ENCODE measurements at regions of chr7 and their contacts with region 1.

Region 1: DNA sequence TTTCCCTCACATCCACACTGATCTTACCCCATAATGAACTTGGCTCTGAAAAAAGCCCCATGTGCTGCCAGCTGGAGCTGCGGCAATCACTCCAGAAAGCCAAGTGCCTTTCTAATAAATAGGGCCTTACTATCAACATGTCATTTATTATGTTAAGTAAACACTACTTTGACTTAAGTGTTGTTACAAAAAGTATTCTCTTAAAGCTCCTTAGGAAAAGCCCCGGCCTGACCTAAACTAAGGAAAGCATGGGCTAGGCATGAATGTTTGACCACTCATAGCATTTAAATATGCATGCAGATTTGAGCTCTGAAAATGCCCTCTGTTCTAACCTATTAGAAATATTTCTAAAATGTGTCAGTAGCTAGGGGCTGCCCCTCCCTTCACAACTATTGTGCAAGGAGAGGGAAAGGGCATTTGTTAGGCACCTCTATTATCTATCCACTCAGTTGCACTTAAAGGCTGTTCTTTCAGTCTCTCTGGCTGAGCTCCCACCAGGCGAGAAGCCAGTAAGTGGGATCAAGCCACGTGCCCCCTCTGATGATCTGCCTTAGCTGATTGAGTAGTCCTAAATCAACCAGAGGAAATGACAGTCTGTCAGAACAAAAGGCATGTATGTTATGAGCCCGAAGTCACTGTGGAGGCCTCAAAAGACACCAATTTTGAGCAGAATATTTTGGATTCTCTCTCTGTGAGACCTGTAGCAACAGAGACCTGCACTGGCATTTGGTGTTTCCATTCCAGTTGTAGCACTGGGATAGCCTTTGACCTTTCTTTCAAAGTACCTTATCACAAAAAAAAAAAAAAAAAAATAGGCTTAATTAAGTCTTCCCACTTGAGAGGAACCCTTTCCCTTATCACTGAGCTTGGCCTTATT is 77.1 kb downstream of the ITGB8 start:
- DNase-seq: peak; percentile 78
- H3K4me3 ChIP-seq: no peak overlapping the region
- H3K27ac ChIP-seq: peak overlapping the region; percentile 28
- H3K4me1 ChIP-seq: peaks cover 17% of the 10 kb centered on the region
- H3K27me3 ChIP-seq: no peaks in the 10 kb centered on the region
- CTCF ChIP-seq: no peak

Region 2: DNA sequence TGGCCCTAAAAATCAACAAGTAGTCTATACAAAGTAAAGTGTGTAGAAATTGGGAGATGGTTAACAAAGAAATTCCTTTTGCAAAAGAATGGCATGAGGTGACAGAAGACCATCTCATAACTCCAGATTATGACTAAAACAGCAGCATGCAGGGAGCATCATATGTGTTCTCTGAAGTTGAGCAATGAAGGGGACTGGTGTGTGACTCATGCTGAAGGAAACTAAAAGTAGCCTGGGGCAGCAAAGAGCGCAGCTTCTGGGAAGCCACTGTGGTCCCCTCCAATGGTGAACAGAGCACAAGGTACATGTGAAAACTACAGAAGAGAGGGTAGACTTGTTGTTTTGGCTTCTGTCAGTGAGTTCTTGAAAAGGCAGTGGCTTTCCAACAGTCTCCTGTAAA is 324.0 kb before region 1 on chr7:
- CTCF ChIA-PET with region 1: no interaction called
- POLR2A ChIA-PET with region 1: no interaction called
- intact Hi-C with region 1: no loop called
- DNase-seq: no peak
- H3K4me3 ChIP-seq: no peak overlapping the region
- H3K27ac ChIP-seq: no peak overlapping the region
- H3K4me1 ChIP-seq: no peaks in the 10 kb centered on the region
- H3K27me3 ChIP-seq: no peaks in the 10 kb centered on the region
- CTCF ChIP-seq: no peak

Region 3: GRCh38 chr7:20114468-20114867 is 293.4 kb before region 1 on chr7:
- CTCF ChIA-PET with region 1: no interaction called
- POLR2A ChIA-PET with region 1: no interaction called
- intact Hi-C with region 1: no loop called
- DNase-seq: peak; percentile 46
- H3K4me3 ChIP-seq: no peak overlapping the region
- H3K27ac ChIP-seq: no peak overlapping the region
- H3K4me1 ChIP-seq: no peaks in the 10 kb centered on the region
- H3K27me3 ChIP-seq: peaks cover 19% of the 10 kb centered on the region
- CTCF ChIP-seq: no peak

Region 4: GRCh38 chr7:20393616-20394015 is 14.2 kb before region 1 on chr7:
- CTCF ChIA-PET with region 1: no interaction called
- POLR2A ChIA-PET with region 1: interaction called, 10 read pairs
- intact Hi-C with region 1: no loop called
- DNase-seq: no peak
- H3K4me3 ChIP-seq: no peak overlapping the region
- H3K27ac ChIP-seq: no peak overlapping the region
- H3K4me1 ChIP-seq: no peaks in the 10 kb centered on the region
- H3K27me3 ChIP-seq: no peaks in the 10 kb centered on the region
- CTCF ChIP-seq: no peak

Measured in A673 (cell line).